ENCODE measurements at regions of chr3 and their contacts with region 1.

Region 1: DNA sequence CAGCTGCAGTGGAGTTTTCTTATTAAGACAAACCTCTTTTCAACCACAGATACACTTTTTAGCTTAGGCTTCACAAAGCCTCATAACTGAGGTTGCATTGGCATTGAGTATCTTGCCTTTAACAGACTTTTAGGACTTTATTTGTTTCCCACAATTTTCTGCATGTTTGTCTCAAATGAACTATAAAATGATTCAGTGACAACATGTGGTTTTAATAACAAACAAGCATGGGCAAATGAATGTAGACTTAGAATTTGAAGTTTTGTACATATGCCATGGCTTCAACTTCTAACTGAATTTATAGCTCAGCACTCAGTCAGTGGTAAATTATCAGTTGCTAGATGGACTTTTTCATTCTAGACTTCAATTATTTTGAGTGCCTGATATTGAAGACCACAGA is 101.6 kb downstream of the SLC25A26 start:
- DNase-seq: no peak
- ATAC-seq: no peak
- H3K4me3 ChIP-seq: no peak overlapping the region
- H3K27ac ChIP-seq: no peak overlapping the region
- H3K4me1 ChIP-seq: peaks cover 4% of the 10 kb centered on the region; the same call in 1 of the 2 replicates
- H3K27me3 ChIP-seq: no peaks in the 10 kb centered on the region
- CTCF ChIP-seq: no peak
- POLR2A ChIP-seq: no peak
- RAD21 ChIP-seq: no peak

Region 2: DNA sequence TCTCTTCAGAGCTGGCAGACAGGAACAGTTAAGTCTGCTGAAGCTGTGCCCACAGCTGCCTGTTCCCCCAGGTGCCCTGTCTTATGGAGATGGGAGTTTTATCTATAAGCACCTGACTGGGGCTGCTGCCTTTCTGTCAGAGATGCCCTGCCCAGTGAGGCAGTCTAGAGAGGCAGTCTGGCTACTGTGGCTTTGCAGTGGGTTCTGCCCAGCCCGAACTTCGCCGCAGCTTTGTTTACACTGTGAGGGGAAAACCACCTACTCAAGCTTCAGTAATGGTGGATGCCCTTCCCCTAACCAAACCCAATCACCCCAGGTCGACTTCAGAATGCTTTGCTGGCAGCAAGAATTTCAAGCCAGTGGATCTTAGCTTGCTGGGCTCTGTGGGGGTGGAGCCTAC is 10.4 kb before region 1 on chr3:
- CTCF ChIA-PET with region 1: interaction called, 3 read pairs
- POLR2A ChIA-PET with region 1: interaction called, 16 read pairs
- dilution Hi-C with region 1: no loop called
- in situ Hi-C with region 1: no loop called
- intact Hi-C with region 1: no loop called
- DNase-seq: no peak
- ATAC-seq: no peak
- H3K4me3 ChIP-seq: no peak overlapping the region
- H3K27ac ChIP-seq: no peak overlapping the region
- H3K4me1 ChIP-seq: no peaks in the 10 kb centered on the region
- H3K27me3 ChIP-seq: no peaks in the 10 kb centered on the region
- CTCF ChIP-seq: no peak
- POLR2A ChIP-seq: no peak
- RAD21 ChIP-seq: no peak